Activated CD8-positive, alpha-beta T cell treated with anti-CD3 and anti-CD28 coated beads for 36 hours (primary cell): ENCODE measurements at regions of chr2 and their contacts with region 1.

Region 1: DNA sequence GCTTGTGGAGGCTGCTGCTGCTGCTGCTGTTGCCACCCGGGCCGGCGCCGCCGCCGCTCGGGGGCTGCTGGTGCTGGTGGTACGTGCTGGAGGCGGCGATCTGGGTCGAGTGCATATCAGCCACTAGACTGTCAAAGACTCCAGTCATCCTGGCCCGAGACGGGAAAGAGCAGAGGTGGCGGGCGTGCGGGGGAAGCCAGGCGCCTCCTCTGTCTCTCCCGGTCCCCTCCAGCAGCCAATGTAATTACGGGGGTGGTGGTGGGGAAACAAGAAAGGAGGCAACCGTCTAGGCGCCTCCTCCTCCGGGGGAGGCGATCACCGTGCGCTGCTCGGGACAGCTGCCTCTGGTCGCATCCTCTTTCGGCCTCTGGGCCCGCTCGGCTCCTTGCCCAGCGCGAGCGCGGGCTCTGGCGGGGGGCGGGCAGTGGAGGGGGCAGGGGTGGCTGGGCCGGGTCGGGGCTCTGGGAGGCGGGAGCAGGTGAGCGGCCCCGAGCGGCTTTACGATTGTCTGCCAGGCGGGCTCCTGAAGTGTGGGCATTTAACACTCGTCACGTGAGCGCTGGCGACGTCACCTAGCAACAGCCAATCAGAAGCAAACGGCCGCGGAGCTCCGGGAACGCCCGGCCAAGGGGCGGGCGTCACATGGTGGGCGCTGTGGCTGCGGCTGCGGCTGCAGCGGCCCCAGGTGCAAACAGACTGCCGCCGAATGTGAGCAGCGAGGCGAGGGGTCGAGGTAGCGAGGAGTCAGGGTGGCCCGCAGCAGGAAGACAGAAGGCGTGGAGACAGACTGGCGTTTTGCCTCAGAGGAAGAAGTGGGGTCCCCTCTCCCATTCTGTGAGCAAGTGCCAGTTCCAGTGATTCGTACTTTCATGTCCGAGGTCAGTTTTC is at the start of gene DLX2:
- DNase-seq: peak; percentile 88
- ATAC-seq: peak; percentile 43
- H3K4me3 Mint-ChIP-seq: peak within 1 kb of the TSS; percentile 76
- H3K27ac Mint-ChIP-seq: no peak within 1 kb of the TSS
- H3K4me1 Mint-ChIP-seq: peaks cover 45% of the 10 kb centered on the region
- H3K27me3 Mint-ChIP-seq: peaks cover 69% of the 10 kb centered on the region
- CTCF ChIP-seq: no peak
- total RNA-seq, gene DLX2: not detected

Region 2: DNA sequence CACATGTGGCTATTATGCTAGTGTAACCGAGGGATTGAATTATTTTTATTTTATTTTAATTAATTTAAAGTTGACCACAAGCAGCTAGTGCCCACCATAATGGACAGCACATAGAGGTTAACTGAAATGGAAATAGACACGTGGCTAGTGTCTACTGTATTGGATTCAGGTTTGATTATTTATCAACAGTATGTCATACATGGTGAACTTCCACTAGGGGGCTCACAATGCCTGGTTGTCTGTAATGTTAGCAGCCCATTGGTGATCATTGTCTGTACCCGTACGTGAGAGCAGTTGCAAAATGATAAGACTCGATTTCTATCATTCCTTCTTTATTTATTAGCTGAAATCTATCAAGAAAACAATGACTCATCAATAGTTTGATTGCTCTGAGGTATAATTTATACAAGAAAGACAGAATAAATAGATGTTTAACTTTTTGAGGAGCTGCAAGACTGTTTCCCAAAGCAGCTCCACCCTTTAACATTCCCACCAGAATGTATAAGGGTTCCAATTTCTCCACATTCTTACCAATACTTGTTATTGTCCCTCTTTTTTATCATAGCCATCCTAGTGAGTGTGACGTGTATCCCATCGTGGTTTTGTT is 503.8 kb before region 1 on chr2:
- CTCF ChIA-PET with region 1: interaction called, 9 read pairs
- POLR2A ChIA-PET with region 1: no interaction called
- intact Hi-C with region 1: loop called (anchors 10 kb)
- DNase-seq: peak; percentile 63
- ATAC-seq: peak; percentile 100
- H3K4me3 Mint-ChIP-seq: no peak overlapping the region
- H3K27ac Mint-ChIP-seq: no peak overlapping the region
- H3K4me1 Mint-ChIP-seq: peaks cover 2% of the 10 kb centered on the region
- H3K27me3 Mint-ChIP-seq: peaks cover 4% of the 10 kb centered on the region
- CTCF ChIP-seq: peak; percentile 79

Region 3: DNA sequence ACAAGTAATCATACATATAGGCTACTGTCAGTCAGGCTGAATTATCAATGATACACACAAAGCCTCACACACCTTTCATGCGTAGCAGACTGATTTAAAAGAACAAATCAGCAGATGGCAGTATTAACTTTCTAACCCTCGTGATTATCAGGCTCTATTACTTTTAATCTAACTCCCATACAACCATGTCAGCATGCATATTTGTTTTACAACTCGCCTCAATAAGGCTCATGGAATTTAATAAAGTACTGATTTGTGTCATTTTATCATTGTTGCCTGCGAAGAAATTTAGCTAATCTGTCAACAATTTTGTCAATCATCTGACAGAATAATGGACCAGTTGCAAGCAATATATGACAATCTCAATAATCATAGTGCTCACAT is 291.4 kb before region 1 on chr2:
- CTCF ChIA-PET with region 1: interaction called, 19 read pairs
- POLR2A ChIA-PET with region 1: no interaction called
- intact Hi-C with region 1: loop called (anchors 5 kb)
- DNase-seq: no peak
- ATAC-seq: peak; percentile 47
- H3K4me3 Mint-ChIP-seq: no peak overlapping the region
- H3K27ac Mint-ChIP-seq: no peak overlapping the region
- H3K4me1 Mint-ChIP-seq: no peaks in the 10 kb centered on the region
- H3K27me3 Mint-ChIP-seq: no peaks in the 10 kb centered on the region
- CTCF ChIP-seq: peak; percentile 13

Region 4: GRCh38 chr2:172084734-172085459 is 17.7 kb before region 1 on chr2:
- CTCF ChIA-PET with region 1: interaction called, 43 read pairs
- POLR2A ChIA-PET with region 1: interaction called, 15 read pairs
- intact Hi-C with region 1: loop called (anchors 2 kb)
- DNase-seq: peak; percentile 80
- ATAC-seq: peak; percentile 79
- H3K4me3 Mint-ChIP-seq: peak overlapping the region; percentile 75
- H3K27ac Mint-ChIP-seq: no peak overlapping the region
- H3K4me1 Mint-ChIP-seq: peaks cover 48% of the 10 kb centered on the region
- H3K27me3 Mint-ChIP-seq: peaks cover 90% of the 10 kb centered on the region
- CTCF ChIP-seq: no peak

Region 5: DNA sequence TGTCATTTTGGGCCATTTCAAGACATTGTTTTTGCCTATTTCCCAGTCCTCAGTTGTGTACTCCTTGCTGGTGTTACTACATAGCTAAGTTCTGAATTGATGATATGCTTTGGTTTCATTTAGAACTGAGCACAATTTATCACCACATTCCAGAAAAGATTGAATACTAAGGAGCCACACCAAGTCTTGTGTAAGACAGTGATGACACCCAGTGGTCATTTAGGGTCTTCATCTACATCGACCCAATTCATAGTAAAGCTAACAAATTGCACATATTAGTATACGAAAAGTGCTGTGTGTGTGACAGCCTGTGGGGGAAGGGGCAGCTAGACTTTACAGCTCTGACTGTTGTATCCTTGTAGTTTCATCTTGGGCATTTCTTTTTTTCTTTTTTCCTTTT is 11.0 kb after region 1 on chr2:
- CTCF ChIA-PET with region 1: interaction called, 10 read pairs
- POLR2A ChIA-PET with region 1: no interaction called
- intact Hi-C with region 1: no loop called
- DNase-seq: no peak
- ATAC-seq: no peak
- H3K4me3 Mint-ChIP-seq: no peak overlapping the region
- H3K27ac Mint-ChIP-seq: no peak overlapping the region
- H3K4me1 Mint-ChIP-seq: no peaks in the 10 kb centered on the region
- H3K27me3 Mint-ChIP-seq: peaks cover 27% of the 10 kb centered on the region
- CTCF ChIP-seq: no peak

Region 6: GRCh38 chr2:172234716-172235691 is 132.4 kb after region 1 on chr2:
- CTCF ChIA-PET with region 1: no interaction called
- POLR2A ChIA-PET with region 1: no interaction called
- intact Hi-C with region 1: no loop called
- DNase-seq: peak; percentile 46
- ATAC-seq: peak; percentile 62
- H3K4me3 Mint-ChIP-seq: peak overlapping the region; percentile 76
- H3K27ac Mint-ChIP-seq: no peak overlapping the region
- H3K4me1 Mint-ChIP-seq: peaks cover 14% of the 10 kb centered on the region
- H3K27me3 Mint-ChIP-seq: peaks cover 27% of the 10 kb centered on the region
- CTCF ChIP-seq: no peak